Activated CD4-positive, alpha-beta T cell treated with anti-CD3 and anti-CD28 coated beads, Interleukin-2, amount 10 ng/mL, durations not matched to agents 24 days and 14 days (primary cell): ENCODE measurements at regions of chr14 and their contacts with region 1.

Region 1: GRCh38 chr14:67704484-67705089 is 2.9 kb downstream of the RDH12 start:
- DNase-seq: peak; percentile 85
- H3K4me3 Mint-ChIP-seq: no peak overlapping the region
- H3K27ac Mint-ChIP-seq: no peak overlapping the region
- H3K4me1 Mint-ChIP-seq: no peaks in the 10 kb centered on the region
- H3K27me3 Mint-ChIP-seq: peaks cover 4% of the 10 kb centered on the region

Region 2: GRCh38 chr14:67166450-67166853 is 538.1 kb before region 1 on chr14:
- intact Hi-C with region 1: loop called (anchors 10 kb)
- DNase-seq: peak; percentile 78
- H3K4me3 Mint-ChIP-seq: no peak overlapping the region
- H3K27ac Mint-ChIP-seq: no peak overlapping the region
- H3K4me1 Mint-ChIP-seq: peaks cover 5% of the 10 kb centered on the region
- H3K27me3 Mint-ChIP-seq: no peaks in the 10 kb centered on the region

Region 3: DNA sequence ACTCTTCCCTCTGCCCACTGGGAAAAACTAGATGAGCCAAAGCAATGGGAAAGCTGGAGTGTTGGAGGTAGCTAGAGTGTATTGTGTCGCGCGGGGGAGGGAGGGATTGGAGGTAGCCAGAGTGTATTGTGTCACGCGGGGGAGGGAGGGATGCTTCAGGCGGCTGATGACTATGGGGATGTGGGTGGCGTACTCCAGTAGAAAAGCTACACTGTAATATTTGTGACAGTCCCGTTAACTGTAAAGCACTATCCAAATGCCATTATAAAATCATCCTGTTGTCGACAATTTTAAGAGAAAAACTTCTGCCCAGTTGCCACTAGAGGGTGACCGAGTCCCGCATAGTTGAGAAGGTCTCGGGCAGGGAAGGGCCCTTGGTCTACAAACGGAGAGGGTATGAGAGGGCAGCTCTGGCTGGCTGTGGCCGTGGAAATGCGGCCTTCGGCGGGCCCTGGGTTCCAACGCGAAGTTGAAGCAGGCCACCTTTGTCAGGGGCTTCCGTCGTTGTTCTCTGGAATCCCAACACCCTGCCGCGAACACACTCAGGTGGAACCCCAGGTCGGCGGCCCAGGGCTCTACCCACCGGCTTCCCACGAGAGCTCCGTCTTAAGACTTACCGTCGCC is 277.5 kb before region 1 on chr14:
- intact Hi-C with region 1: loop called (anchors 10 kb)
- DNase-seq: peak; percentile 91
- H3K4me3 Mint-ChIP-seq: no peak overlapping the region
- H3K27ac Mint-ChIP-seq: no peak overlapping the region
- H3K4me1 Mint-ChIP-seq: peaks cover 3% of the 10 kb centered on the region
- H3K27me3 Mint-ChIP-seq: peaks cover 27% of the 10 kb centered on the region

Region 4: GRCh38 chr14:67526676-67527459 is 177.7 kb before region 1 on chr14:
- intact Hi-C with region 1: loop called (anchors 1 kb)
- DNase-seq: peak; percentile 82
- H3K4me3 Mint-ChIP-seq: no peak overlapping the region
- H3K27ac Mint-ChIP-seq: no peak overlapping the region
- H3K4me1 Mint-ChIP-seq: no peaks in the 10 kb centered on the region
- H3K27me3 Mint-ChIP-seq: peaks cover 56% of the 10 kb centered on the region

Region 5: GRCh38 chr14:67583711-67584644 is 120.6 kb before region 1 on chr14:
- intact Hi-C with region 1: loop called (anchors 1 kb)
- DNase-seq: peak; percentile 77
- H3K4me3 Mint-ChIP-seq: no peak overlapping the region
- H3K27ac Mint-ChIP-seq: no peak overlapping the region
- H3K4me1 Mint-ChIP-seq: peaks cover 3% of the 10 kb centered on the region
- H3K27me3 Mint-ChIP-seq: no peaks in the 10 kb centered on the region

Region 6: DNA sequence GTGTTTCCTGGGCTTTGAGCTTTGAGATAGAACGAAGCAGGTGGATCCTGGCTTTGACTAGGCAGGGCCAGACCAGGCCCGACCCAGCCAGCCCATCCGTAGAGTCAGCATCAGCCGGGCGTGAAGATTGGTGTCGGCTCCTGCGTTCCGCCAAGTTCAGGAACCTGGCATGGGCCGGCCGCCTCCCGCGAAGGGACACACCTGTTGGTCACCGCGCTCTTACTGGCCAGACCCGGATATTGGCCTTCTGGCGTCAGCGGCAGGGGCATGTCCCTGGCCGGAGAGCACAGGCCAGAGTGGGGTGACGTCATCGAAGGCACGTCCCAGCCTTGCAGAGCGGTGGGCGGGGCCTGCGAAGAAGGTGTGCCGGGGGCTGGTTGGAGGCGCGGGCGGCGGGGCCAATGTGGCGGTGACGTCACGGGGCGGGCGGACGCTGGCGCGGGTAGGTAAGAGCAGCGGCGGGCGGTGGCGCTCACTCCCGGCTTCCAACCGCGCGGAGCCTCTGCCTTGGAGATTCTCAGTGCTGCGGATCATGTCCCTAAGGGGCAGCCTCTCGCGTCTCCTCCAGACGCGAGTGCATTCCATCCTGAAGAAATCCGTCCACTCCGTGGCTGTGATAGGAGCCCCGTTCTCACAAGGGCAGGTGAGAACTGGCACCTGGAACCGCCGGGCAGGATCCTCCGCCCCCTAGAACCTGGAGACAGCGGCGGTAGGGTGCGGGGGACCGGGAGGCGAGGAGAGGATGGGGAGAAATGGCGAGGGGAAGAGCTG is 85.0 kb before region 1 on chr14 and contains the start of gene ARG2:
- intact Hi-C with region 1: loop called (anchors 1 kb)
- DNase-seq: peak; percentile 99
- H3K4me3 Mint-ChIP-seq: peak within 1 kb of the TSS; percentile 92
- H3K27ac Mint-ChIP-seq: peak within 1 kb of the TSS; percentile 85
- H3K4me1 Mint-ChIP-seq: peaks cover 33% of the 10 kb centered on the region
- H3K27me3 Mint-ChIP-seq: peaks cover 15% of the 10 kb centered on the region
- total RNA-seq, gene ARG2: 4.7 and 5.0 TPM in 2 replicates

Region 7: DNA sequence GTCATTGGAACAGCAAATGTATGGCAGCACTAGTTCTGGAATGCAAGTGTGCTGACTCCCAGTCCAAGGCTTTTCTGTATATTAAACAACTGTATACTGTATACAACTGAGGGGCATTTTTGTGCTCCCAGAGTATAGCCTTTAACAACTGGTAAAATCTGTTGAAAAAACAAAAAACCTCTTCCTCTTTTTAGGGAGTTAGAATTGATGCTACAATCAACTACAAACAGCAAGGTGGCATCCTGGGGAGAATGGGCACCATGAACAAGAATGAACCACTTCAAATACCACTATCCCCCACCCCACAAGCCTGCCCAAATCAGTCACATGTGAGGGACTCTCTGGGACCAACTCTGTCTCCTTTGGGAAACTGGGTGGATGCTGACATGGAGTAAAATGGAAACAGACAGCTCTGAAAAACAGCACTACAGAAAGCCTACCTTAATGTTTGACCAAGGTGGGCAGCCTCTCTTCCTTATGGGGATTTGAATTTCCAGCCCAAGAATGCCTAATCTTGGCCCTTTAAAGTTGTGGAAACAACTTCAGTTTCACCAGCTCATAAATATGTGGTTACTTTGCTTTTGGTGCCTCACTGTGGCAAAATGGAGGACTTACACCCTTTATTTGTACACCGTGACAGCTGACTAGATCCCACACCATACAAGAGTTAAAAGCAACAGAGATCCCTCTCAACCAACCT is 37.7 kb before region 1 on chr14:
- intact Hi-C with region 1: loop called (anchors 2 kb)
- DNase-seq: peak; percentile 81
- H3K4me3 Mint-ChIP-seq: no peak overlapping the region
- H3K27ac Mint-ChIP-seq: peak overlapping the region; percentile 22
- H3K4me1 Mint-ChIP-seq: peaks cover 32% of the 10 kb centered on the region
- H3K27me3 Mint-ChIP-seq: no peaks in the 10 kb centered on the region